ENCODE measurements at regions of chr3 and their contacts with region 1.

Region 1: DNA sequence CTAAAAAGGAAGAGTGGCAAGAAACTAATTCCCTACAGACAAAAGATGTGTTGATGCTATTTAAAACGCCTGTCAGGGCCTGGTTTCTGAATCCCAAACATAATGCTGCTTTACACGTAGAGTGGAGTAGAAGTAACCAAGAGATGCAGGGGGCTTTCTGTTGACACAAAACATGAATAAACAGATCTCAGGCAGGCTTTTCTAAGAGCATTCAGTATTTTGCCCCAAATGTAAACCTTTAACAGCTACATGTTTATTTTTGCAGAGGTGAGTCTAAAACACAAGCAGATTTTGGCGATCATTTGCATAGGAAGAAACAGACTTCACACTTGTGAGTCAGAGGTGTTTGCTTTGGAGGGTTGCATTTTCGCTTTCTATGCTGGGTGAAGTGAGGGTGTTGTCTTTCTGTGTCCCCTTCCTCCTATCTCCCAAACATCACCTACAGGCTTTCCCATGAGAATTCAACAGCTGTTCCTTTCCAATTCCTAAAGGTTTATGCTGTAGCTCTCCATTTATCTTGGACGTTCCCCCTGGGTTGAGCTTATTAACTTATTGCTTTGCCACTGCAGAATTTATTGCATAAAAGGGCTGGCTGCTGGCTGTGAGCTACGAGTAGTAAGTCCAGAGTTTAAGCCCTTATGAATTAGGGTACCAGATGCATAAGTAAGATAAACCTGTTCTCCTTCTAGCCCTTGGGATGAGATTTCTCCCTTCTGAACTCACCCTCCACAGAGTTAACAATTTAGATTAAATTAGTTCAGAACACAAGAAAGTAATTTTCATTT is 156.7 kb downstream of the DIPK2A start:
- DNase-seq: peak; percentile 78
- ATAC-seq: peak; percentile 94
- H3K4me3 ChIP-seq: peak overlapping the region; percentile 56; the same call in 1 of the 2 replicates
- H3K27ac ChIP-seq: peak overlapping the region; percentile 91
- H3K4me1 ChIP-seq: peaks cover 19% of the 10 kb centered on the region; the same call in 1 of the 2 replicates
- H3K27me3 ChIP-seq: no peaks in the 10 kb centered on the region
- CTCF ChIP-seq: no peak
- EP300 ChIP-seq: peak; percentile 25 to 57; a peak in 1 of 4 replicates
- POLR2A ChIP-seq: peak; percentile 42; the same call in 1 of the 2 replicates
- RAD21 ChIP-seq: no peak

Region 2: DNA sequence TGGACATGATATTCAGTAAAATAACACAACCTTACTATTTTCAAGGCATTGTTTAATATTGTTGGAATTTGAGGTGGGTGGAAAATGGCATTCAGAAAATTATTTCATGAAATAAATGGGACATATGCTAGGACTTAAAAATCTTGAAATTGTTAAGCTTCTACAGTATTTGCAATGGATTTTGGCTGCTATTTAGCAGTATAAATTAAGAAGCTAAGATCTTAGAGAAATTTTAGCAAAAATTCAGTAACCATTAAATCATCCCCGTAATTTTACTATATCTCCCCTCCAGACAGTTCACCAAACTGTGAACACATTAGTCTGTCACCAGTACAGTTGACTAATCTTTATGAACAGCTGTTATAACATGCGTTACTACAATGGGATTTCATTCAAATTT is 148.5 kb before region 1 on chr3:
- CTCF ChIA-PET with region 1: interaction called, 16 read pairs
- POLR2A ChIA-PET with region 1: no interaction called
- RAD21 ChIA-PET with region 1: interaction called, 3 read pairs
- SMC1A ChIA-PET with region 1: interaction called, 8 read pairs
- in situ Hi-C with region 1: loop called (anchors 5 kb)
- intact Hi-C with region 1: no loop called
- DNase-seq: no peak
- ATAC-seq: no peak
- H3K4me3 ChIP-seq: no peak overlapping the region
- H3K27ac ChIP-seq: no peak overlapping the region
- H3K4me1 ChIP-seq: no peaks in the 10 kb centered on the region
- H3K27me3 ChIP-seq: no peaks in the 10 kb centered on the region
- CTCF ChIP-seq: no peak
- EP300 ChIP-seq: no peak
- POLR2A ChIP-seq: no peak
- RAD21 ChIP-seq: no peak

Region 3: GRCh38 chr3:144028798-144029411 is 99.4 kb before region 1 on chr3:
- CTCF ChIA-PET with region 1: no interaction called
- POLR2A ChIA-PET with region 1: interaction called, 4 read pairs
- RAD21 ChIA-PET with region 1: no interaction called
- SMC1A ChIA-PET with region 1: no interaction called
- in situ Hi-C with region 1: no loop called
- intact Hi-C with region 1: loop called (anchors 2 kb)
- DNase-seq: peak; percentile 72
- ATAC-seq: peak; percentile 93
- H3K4me3 ChIP-seq: no peak overlapping the region
- H3K27ac ChIP-seq: peak overlapping the region; percentile 77
- H3K4me1 ChIP-seq: peaks cover 33% of the 10 kb centered on the region
- H3K27me3 ChIP-seq: no peaks in the 10 kb centered on the region
- CTCF ChIP-seq: peak in 1 of 3 experiments; percentile 24; a peak in 1 of 6 replicates
- EP300 ChIP-seq: peak; percentile 86 to 99
- POLR2A ChIP-seq: no peak
- RAD21 ChIP-seq: no peak